WTC11 (cell line): ENCODE measurements at regions of chr16 and their contacts with region 1.

Region 1: GRCh38 chr16:11715246-11715947 is 27.3 kb downstream of the TXNDC11 start:
- DNase-seq: no peak
- ATAC-seq: no peak
- H3K4me3 Mint-ChIP-seq: no peak overlapping the region
- H3K27ac Mint-ChIP-seq: no peak overlapping the region
- H3K4me1 Mint-ChIP-seq: peaks cover 9% of the 10 kb centered on the region
- H3K27me3 Mint-ChIP-seq: no peaks in the 10 kb centered on the region
- CTCF ChIP-seq: no peak

Region 2: DNA sequence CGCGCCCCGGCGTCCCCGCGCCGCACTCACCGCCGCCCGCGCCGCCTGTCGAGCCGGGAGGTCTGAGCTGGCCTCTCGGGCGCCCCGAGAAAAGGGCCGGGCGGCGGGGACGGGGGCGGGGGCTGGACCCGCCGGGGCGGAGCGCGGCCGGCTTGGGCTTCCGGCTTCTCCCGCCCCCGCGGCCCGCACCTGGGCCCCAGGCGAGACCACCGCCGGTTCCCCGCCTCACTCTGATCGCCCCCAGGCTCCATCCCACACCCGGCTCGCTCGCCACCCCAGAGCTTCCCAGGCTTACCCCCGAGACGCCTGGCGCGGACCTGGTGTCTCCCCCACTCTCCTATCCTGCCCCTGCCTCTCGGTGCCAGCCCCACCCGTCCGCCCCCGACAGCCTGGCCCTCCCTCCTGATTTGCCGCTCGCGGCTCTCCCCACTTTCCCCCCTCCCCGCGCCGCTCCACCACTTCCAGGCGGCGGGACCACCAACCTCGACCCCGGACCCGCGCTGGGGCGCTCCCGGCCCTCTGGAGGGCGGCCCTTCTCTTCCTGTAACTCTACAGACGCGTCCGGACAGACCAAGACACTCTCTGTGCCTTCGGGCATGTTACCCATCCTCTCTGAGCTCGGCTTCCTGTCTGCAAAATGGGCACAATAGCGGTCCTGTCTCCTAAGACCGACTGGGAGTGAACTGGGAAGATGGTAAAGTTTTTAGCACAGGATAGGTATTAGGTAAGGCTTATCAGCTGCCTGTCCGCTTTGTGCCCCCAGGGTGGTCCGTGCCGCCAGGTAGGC is 128.3 kb before region 1 on chr16 and contains the start of gene LITAF:
- CTCF ChIA-PET with region 1: interaction called, 12 read pairs
- POLR2A ChIA-PET with region 1: no interaction called
- DNase-seq: peak; percentile 59
- ATAC-seq: peak; percentile 67
- H3K4me3 Mint-ChIP-seq: peak within 1 kb of the TSS; percentile 81
- H3K27ac Mint-ChIP-seq: peak within 1 kb of the TSS; percentile 92
- H3K4me1 Mint-ChIP-seq: peaks cover 38% of the 10 kb centered on the region
- H3K27me3 Mint-ChIP-seq: peaks cover 61% of the 10 kb centered on the region
- CTCF ChIP-seq: no peak
- total RNA-seq, gene LITAF: 72.4 to 77.7 TPM (median 73.0 TPM) in 3 replicates

Region 3: GRCh38 chr16:11621920-11622651 is 93.3 kb before region 1 on chr16:
- CTCF ChIA-PET with region 1: no interaction called
- POLR2A ChIA-PET with region 1: no interaction called
- DNase-seq: no peak
- ATAC-seq: no peak; the same call in 1 of the 2 replicates
- H3K4me3 Mint-ChIP-seq: no peak overlapping the region
- H3K27ac Mint-ChIP-seq: no peak overlapping the region
- H3K4me1 Mint-ChIP-seq: peaks cover 8% of the 10 kb centered on the region
- H3K27me3 Mint-ChIP-seq: peaks cover 21% of the 10 kb centered on the region
- CTCF ChIP-seq: no peak

Region 4: GRCh38 chr16:11698271-11698689 is 17.1 kb before region 1 on chr16:
- CTCF ChIA-PET with region 1: interaction called, 15 read pairs
- POLR2A ChIA-PET with region 1: no interaction called
- DNase-seq: no peak
- ATAC-seq: peak; percentile 38; the same call in 1 of the 2 replicates
- H3K4me3 Mint-ChIP-seq: no peak overlapping the region
- H3K27ac Mint-ChIP-seq: peak overlapping the region; percentile 71; the same call in 1 of the 2 replicates
- H3K4me1 Mint-ChIP-seq: no peaks in the 10 kb centered on the region
- H3K27me3 Mint-ChIP-seq: no peaks in the 10 kb centered on the region
- CTCF ChIP-seq: no peak

Region 5: GRCh38 chr16:11916524-11917285 is 201.3 kb after region 1 on chr16:
- CTCF ChIA-PET with region 1: no interaction called
- POLR2A ChIA-PET with region 1: no interaction called
- DNase-seq: no peak
- ATAC-seq: no peak
- H3K4me3 Mint-ChIP-seq: peak overlapping the region; percentile 78
- H3K27ac Mint-ChIP-seq: peak overlapping the region; percentile 89
- H3K4me1 Mint-ChIP-seq: peaks cover 27% of the 10 kb centered on the region
- H3K27me3 Mint-ChIP-seq: no peaks in the 10 kb centered on the region; the same call in 1 of the 2 replicates
- CTCF ChIP-seq: no peak